ENCODE measurements at regions of chr14 and their contacts with region 1.

Region 1: GRCh38 chr14:73851644-73852382 is at the start of gene PTGR2:
- DNase-seq: peak; percentile 93 to 96 (median 95)
- H3K4me3 ChIP-seq: peak within 1 kb of the TSS; percentile 52 to 88 (median 75)
- H3K4me3 Mint-ChIP-seq: peak within 1 kb of the TSS; percentile 91 to 97
- H3K27ac ChIP-seq: peak within 1 kb of the TSS; percentile 83 to 92
- H3K27ac Mint-ChIP-seq: peak within 1 kb of the TSS; percentile 97 to 99 (median 98)
- H3K4me1 ChIP-seq: peaks cover 18 to 23% of the 10 kb centered on the region in 2 donors
- H3K4me1 Mint-ChIP-seq: peaks cover 20% of the 10 kb centered on the region
- H3K27me3 ChIP-seq: no peaks in the 10 kb centered on the region
- H3K27me3 Mint-ChIP-seq: peaks cover 0 to 2% (median 0%) of the 10 kb centered on the region in 3 donors
- CTCF ChIP-seq: no peak
- polyA plus RNA-seq, gene PTGR2: 1.1 to 3.8 (median 1.1) TPM

Region 2: DNA sequence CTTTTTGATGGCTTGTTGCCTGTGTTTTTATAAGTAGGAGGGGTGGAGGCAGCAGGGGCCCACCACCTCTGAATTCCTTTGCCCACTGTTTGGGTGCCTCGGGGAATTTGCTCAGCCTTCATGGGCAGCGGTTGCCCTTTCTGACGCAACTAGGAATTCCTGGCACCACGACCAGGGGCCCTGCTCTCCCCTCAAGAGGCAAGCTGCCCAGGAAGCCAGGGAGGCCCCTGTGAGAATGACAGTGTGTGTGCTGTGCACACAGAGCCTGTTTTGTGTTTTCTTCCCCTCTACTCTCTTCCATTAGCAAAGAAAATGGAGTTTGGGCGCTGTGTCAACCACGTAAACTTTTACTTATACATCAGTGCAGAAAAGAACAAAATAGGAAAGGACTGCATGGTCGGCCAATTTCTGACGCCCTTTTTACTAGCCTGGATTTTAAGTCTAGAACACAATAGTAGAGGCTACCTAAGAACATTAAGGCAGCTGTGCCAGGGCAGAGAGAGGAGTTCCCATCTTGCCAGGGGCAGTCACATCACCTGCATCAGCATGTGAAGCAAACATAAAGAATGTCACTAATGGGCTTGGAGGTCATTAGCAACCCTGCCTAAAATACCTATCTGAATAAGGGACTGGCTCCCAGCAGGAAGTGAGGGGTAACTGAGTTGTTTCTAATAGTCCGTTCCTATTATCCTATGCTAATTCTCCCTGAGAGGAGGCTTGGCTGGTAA is 18.1 kb before region 1 on chr14:
- intact Hi-C with region 1: loop called in 1 of 2 experiments (anchors 1 kb)
- DNase-seq: no peak
- H3K4me3 ChIP-seq: no peak overlapping the region
- H3K4me3 Mint-ChIP-seq: no peak overlapping the region
- H3K27ac ChIP-seq: no peak overlapping the region
- H3K27ac Mint-ChIP-seq: peak overlapping the region in 1 of 7 donors; percentile 68
- H3K4me1 ChIP-seq: peaks cover 4 to 5% of the 10 kb centered on the region in 2 donors
- H3K4me1 Mint-ChIP-seq: peaks cover 13% of the 10 kb centered on the region
- H3K27me3 ChIP-seq: no peaks in the 10 kb centered on the region
- H3K27me3 Mint-ChIP-seq: peaks cover 0 to 5% (median 2%) of the 10 kb centered on the region in 3 donors
- CTCF ChIP-seq: no peak

Region 3: GRCh38 chr14:73886449-73887317 is 34.9 kb after region 1 on chr14 and contains the start of gene ZNF410:
- intact Hi-C with region 1: loop called in 1 of 2 experiments (anchors 5 kb)
- DNase-seq: peak; percentile 94 to 97 (median 95)
- H3K4me3 ChIP-seq: peak within 1 kb of the TSS; percentile 54 to 90 (median 73)
- H3K4me3 Mint-ChIP-seq: peak within 1 kb of the TSS; percentile 88 to 93
- H3K27ac ChIP-seq: peak within 1 kb of the TSS; percentile 89 to 94
- H3K27ac Mint-ChIP-seq: peak within 1 kb of the TSS; percentile 94 to 98 (median 97)
- H3K4me1 ChIP-seq: peaks cover 19 to 25% of the 10 kb centered on the region in 2 donors
- H3K4me1 Mint-ChIP-seq: peaks cover 31% of the 10 kb centered on the region
- H3K27me3 ChIP-seq: no peaks in the 10 kb centered on the region
- H3K27me3 Mint-ChIP-seq: peaks cover 0 to under 1% (median 0%) of the 10 kb centered on the region in 3 donors
- CTCF ChIP-seq: no peak
- polyA plus RNA-seq, gene ZNF410: 20.4 to 53.3 (median 42.5) TPM

Measured in CD14-positive monocyte (primary cell).